Activated T-helper 2 cell treated with anti-CD3 and anti-CD28 coated beads, Interferon-gamma antibody, Interleukin-2, Interleukin-4, amounts not matched to agents 10 μg/mL and 5 μg/mL and 100 μg/mL, durations not matched to agents 14 hours and 24 hours and 36 hours (primary cell): ENCODE measurements at regions of chr10 and their contacts with region 1.

Region 1: DNA sequence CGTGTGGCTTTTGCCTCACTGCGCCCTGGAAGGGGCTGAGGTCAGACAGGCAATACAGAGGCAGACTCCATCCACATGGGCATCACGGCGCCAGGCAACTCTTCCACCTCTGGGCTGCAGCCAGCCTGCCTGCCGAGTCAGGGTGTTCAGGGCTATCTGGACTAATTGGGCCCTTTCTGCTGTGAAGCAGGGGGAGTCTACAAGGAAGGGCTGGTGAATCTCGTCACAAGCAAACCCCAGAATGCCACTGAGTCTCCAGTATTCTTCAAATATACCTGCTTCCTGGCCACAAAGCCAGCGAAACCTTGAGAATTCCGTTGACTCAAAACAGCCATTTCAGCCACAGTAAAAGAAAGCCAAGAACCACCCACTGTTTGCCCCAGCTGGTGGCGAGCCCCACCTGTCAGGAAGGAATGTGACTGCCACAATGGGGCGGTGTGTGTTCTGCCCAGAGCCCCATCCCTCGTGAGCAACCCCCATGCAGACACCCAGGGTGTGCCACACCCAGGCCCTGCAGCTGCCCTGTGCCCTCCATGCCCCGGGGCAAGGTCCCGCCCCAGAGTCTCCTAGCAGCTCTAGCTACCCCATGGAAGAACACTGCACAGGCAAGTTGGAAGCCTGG is 117.3 kb downstream of the FAM53B start:
- DNase-seq: peak; percentile 46
- H3K4me3 Mint-ChIP-seq: no peak overlapping the region
- H3K27ac Mint-ChIP-seq: no peak overlapping the region
- H3K4me1 Mint-ChIP-seq: peaks cover 22% of the 10 kb centered on the region
- H3K27me3 Mint-ChIP-seq: peaks cover 13% of the 10 kb centered on the region

Region 2: GRCh38 chr10:123966896-123967231 is 660.0 kb before region 1 on chr10:
- intact Hi-C with region 1: no loop called
- DNase-seq: no peak
- H3K4me3 Mint-ChIP-seq: no peak overlapping the region
- H3K27ac Mint-ChIP-seq: no peak overlapping the region
- H3K4me1 Mint-ChIP-seq: no peaks in the 10 kb centered on the region
- H3K27me3 Mint-ChIP-seq: peaks cover 23% of the 10 kb centered on the region

Region 3: DNA sequence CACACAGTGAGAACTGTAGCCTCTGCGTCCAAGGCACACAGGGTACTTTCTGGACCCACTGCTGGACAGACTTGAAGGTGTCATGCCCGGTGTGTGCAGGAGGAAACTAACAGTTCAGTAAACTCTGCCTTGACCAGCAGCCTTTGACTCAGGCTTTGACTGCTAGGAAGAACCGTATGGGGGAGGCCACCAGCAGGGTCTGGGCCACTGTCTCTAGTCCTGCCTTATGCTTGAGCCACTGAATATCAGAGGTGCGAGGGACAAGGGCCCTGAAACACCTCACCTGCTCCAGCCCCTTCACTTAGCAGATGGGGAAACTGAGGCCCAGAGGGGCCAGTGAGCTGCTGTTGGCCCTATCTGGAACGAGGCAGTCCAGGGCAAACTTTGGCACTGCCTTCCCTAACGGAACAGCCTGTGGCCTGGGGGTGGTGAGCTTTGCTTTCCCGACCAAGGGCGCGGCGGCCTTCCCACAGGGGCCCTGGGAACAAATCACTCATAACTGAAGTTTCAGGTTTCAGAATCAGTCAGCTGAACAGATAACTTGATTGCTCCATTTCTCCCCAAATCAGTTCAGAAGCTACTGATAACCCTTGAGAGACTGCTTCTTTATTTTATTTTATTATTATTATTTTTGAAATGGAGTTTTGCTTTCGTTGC is 12.7 kb before region 1 on chr10:
- intact Hi-C with region 1: loop called (anchors 1 kb)
- DNase-seq: peak; percentile 43
- H3K4me3 Mint-ChIP-seq: no peak overlapping the region
- H3K27ac Mint-ChIP-seq: no peak overlapping the region
- H3K4me1 Mint-ChIP-seq: peaks cover 23% of the 10 kb centered on the region
- H3K27me3 Mint-ChIP-seq: peaks cover 14% of the 10 kb centered on the region

Region 4: DNA sequence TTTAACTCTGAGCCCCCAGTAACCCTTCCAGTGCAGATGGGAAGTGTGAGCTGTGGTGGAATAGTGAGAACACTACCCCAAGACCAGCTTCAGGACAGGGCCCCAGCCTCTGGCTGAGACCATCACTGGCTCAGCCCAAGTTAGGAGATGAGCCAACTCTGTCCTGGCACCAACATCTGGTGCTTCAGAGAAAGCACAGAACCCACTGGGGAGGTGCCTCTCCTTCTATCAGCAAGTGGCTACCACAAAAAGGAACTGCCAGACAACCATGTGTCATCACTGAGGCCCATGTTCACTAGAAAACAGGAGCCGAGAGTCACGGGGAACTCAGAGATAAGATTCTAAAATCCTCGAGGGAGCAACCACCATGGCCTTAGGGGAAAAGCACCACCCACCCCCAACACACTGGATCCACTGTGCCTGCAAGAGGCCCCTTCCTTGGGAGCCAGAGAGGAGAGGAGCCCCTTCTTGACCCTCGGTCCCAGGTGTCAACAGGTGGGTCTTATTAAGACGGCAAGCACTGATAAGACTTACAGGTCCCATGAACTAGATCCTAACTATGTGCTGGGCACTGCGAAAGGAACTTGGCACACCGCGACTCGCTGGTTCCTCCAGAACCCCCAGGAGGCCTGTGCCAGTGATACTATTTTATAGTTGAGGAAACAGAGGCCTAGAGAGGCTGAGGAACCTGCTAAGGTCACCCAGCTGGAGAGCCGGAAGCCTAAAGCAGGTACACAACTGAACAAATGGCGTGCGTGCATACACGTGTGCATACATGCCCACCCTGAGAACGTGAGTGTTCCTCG is 14.6 kb after region 1 on chr10:
- intact Hi-C with region 1: loop called (anchors 2 kb)
- DNase-seq: no peak
- H3K4me3 Mint-ChIP-seq: peak overlapping the region; percentile 15
- H3K27ac Mint-ChIP-seq: peak overlapping the region; percentile 65
- H3K4me1 Mint-ChIP-seq: peaks cover 30% of the 10 kb centered on the region
- H3K27me3 Mint-ChIP-seq: no peaks in the 10 kb centered on the region

Region 5: GRCh38 chr10:124652701-124653100 is 25.8 kb after region 1 on chr10:
- intact Hi-C with region 1: no loop called
- DNase-seq: no peak
- H3K4me3 Mint-ChIP-seq: no peak overlapping the region
- H3K27ac Mint-ChIP-seq: no peak overlapping the region
- H3K4me1 Mint-ChIP-seq: peaks cover 50% of the 10 kb centered on the region
- H3K27me3 Mint-ChIP-seq: no peaks in the 10 kb centered on the region